ENCODE measurements at regions of chr18 and their contacts with region 1.

Region 1: GRCh38 chr18:2547477-2548087 is 23.7 kb downstream of the METTL4 start:
- DNase-seq: no peak
- H3K4me3 ChIP-seq: no peak overlapping the region
- CTCF ChIP-seq: peak; percentile 34

Region 2: GRCh38 chr18:864872-865273 is 1682.7 kb before region 1 on chr18:
- CTCF ChIA-PET with region 1: interaction called, 12 read pairs
- POLR2A ChIA-PET with region 1: no interaction called
- DNase-seq: peak; percentile 10
- H3K4me3 ChIP-seq: no peak overlapping the region
- CTCF ChIP-seq: peak; percentile 92

Region 3: DNA sequence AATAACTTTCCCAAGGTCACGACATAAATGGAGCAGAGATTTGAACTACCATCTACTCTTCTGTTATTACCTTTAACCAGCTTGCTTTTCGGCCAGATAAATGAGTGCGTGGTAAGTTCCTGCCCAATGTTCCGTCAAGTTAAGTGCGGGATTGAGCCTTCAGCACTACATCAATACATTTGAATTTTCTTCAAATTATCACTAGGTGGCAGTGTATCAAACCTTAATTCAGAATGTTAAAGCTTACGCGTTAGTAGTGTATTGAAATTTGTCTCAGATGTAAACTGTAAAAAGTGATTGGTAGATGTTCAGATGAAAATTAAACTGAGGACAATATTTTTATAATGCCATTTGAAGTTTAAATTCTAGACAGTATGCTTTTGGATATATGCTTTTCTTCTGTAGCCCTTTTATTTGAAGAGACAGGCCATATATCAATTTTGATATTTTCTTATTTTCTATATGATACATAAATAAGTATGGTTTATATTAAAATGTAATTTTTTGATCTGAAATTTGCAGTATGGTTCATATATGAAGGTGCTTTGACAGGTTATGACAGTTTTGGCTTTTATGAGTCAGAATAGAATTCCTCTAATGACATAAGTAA is 961.6 kb before region 1 on chr18:
- CTCF ChIA-PET with region 1: interaction called, 90 read pairs
- POLR2A ChIA-PET with region 1: no interaction called
- DNase-seq: no peak
- H3K4me3 ChIP-seq: no peak overlapping the region
- CTCF ChIP-seq: peak; percentile 28

Region 4: GRCh38 chr18:2104620-2105462 is 442.7 kb before region 1 on chr18:
- CTCF ChIA-PET with region 1: interaction called, 184 read pairs
- POLR2A ChIA-PET with region 1: no interaction called
- DNase-seq: no peak
- H3K4me3 ChIP-seq: no peak overlapping the region
- CTCF ChIP-seq: peak; percentile 80

Region 5: GRCh38 chr18:2337552-2338141 is 209.9 kb before region 1 on chr18:
- CTCF ChIA-PET with region 1: interaction called, 48 read pairs
- POLR2A ChIA-PET with region 1: no interaction called
- DNase-seq: no peak
- H3K4me3 ChIP-seq: no peak overlapping the region
- CTCF ChIP-seq: peak; percentile 65

Region 6: GRCh38 chr18:2536493-2536892 is 11.1 kb before region 1 on chr18:
- CTCF ChIA-PET with region 1: interaction called, 12 read pairs
- POLR2A ChIA-PET with region 1: no interaction called
- DNase-seq: no peak
- H3K4me3 ChIP-seq: no peak overlapping the region
- CTCF ChIP-seq: no peak

Region 7: GRCh38 chr18:2564373-2564772 is 16.8 kb after region 1 on chr18:
- CTCF ChIA-PET with region 1: interaction called, 10 read pairs
- POLR2A ChIA-PET with region 1: no interaction called
- DNase-seq: no peak
- H3K4me3 ChIP-seq: no peak overlapping the region
- CTCF ChIP-seq: no peak

Region 8: GRCh38 chr18:3454365-3455089 is 906.9 kb after region 1 on chr18:
- CTCF ChIA-PET with region 1: no interaction called
- POLR2A ChIA-PET with region 1: no interaction called
- DNase-seq: no peak
- H3K4me3 ChIP-seq: peak overlapping the region; percentile 81
- CTCF ChIP-seq: peak; percentile 49